ENCODE measurements at regions of chr14 and their contacts with region 1.

Region 1: DNA sequence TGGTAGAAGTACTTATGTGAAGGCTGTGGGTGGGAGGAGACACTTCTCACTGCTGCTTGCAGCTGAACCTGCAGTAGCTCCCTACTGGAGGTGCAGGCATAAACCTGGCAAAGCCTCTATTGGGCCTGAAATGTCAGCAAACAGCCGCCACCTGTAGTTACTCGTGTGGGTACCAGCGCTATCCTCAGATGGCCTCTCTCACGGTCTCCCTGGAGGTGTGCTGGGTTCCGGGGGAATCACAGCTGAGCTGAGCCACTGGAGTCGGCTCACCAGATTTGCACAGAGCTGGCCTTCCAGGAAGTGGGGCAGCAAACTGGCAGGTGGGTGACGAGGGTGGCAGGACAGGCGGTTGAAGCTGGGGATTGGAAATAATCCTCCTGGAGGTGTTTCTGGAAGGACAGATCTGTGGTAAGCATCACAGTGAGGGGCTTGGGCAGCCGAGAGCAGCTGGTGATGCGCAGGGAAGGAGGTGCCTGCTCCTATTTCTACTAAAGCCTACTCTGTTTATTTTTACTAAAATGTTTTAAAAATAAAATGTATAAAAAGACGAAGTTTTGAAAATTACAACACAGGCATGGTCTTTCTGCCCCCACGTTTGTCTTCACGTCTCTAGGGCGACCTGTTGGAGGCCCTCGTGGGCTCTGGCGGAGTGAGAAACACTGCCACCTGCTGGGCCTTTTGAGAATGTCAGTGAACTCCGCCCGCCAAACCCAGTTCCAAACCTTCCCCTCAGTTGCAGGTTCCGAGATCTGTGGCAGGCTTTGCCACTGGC is 67.8 kb upstream of the PLEKHG3 start:
- DNase-seq: peak; percentile 77
- CTCF ChIP-seq: peak; percentile 83

Region 2: DNA sequence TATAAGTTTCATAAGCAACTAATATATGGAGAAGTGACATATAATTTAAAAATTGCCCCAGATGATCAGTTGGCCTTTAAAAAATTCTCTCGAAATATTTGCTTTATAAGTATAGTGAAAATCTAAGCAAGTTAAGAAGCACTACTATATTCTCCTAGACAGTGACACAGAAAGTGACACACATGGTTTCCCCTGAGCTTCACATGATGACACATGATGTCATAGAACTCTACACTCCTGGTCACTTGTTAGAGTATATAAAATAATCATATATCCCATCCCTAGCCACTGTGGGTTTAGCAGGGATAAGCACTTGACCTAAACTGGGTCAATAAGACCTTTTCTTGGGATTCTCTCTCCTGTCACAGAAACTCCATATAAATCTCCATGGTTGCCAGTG is 290.9 kb before region 1 on chr14:
- CTCF ChIA-PET with region 1: interaction called, 60 read pairs
- POLR2A ChIA-PET with region 1: no interaction called
- DNase-seq: no peak
- CTCF ChIP-seq: no peak

Region 3: DNA sequence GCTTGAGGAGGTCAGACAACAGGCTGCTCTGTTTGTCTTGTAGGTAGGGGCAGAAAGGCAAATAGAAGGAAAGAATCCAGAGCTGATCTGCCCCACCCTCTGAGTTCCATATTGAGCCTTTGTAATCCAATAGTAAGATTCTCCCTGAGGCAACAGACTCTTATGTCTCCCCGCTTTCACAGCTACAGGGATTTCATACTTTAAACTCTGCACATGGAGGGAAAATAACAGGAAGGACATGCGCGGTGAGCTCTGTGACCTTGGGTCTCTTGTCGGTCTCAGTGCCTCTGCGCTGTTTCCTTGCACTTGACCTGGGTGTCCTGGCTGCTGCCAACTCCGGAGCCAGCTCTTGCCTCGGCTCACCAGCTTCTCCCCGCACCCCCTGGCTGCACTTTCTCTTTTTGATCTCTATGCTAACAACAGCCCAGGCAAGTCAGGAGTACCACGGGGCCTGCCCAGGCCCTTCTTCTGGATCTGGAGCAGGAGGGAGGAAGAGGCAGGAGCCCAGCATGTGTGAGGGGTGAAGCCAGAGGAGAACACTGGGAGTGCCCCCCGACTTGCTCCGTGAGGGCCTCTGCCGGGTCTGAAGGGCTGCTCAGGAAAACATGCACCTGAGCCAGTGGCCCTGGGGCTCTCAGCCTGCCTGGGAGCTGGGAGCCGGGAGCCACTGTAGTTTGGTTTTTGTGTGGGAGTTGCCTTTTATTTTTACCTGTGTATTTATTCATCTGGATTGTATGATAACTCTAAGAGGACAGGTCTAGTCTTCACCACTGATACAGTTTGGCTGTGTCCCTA is 10.7 kb before region 1 on chr14:
- CTCF ChIA-PET with region 1: interaction called, 22 read pairs
- POLR2A ChIA-PET with region 1: no interaction called
- DNase-seq: no peak
- CTCF ChIP-seq: no peak

Region 4: GRCh38 chr14:64654246-64654900 is 18.0 kb after region 1 on chr14:
- CTCF ChIA-PET with region 1: interaction called, 20 read pairs
- POLR2A ChIA-PET with region 1: no interaction called
- DNase-seq: no peak
- CTCF ChIP-seq: no peak

Measured in GM10248 (cell line).